PC-9 (cell line): ENCODE measurements at regions of chr5 and their contacts with region 1.

Region 1: GRCh38 chr5:32223946-32224608 is 50.0 kb upstream of the GOLPH3 start:
- DNase-seq: peak; percentile 94 to 96
- H3K4me3 ChIP-seq: no peak overlapping the region
- H3K27ac ChIP-seq: peak overlapping the region; percentile 57
- H3K4me1 ChIP-seq: peaks cover 33% of the 10 kb centered on the region
- H3K27me3 ChIP-seq: no peaks in the 10 kb centered on the region
- CTCF ChIP-seq: no peak

Region 2: DNA sequence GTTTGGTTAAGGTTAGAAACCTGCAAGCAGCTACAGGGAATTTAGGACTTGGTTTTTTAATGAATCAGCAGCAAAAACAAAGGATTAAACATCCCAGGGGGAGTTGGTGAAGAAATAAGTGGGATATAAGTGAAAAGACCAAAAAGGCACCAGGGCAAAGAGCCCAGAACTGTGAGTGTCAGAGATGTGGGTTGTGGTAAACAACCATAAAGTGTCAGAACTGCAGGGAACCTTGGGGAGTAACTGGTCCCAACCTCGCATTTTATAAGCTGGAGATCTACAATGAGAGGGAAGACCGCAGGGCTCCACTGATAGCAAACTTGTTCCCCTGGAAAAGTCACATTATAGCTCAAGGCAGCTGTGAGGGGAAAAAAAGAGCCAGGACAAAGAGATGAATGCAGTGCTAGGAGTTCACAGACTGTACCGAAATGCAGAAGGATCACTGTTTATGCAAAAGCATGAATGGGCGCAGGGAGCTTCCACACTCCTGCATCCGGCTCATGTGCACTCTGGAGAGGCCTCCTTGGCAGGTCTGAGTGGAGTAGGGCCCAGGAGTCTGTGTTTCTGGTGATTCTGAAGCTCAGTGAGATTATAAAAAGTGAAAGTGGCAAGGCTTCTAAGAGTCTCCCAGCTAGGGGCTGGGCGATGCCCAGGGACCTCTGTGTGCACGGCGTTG is 206.2 kb before region 1 on chr5:
- CTCF ChIA-PET with region 1: no interaction called
- POLR2A ChIA-PET with region 1: no interaction called
- intact Hi-C with region 1: no loop called
- DNase-seq: no peak
- H3K4me3 ChIP-seq: no peak overlapping the region
- H3K27ac ChIP-seq: no peak overlapping the region
- H3K4me1 ChIP-seq: no peaks in the 10 kb centered on the region
- H3K27me3 ChIP-seq: peaks cover 91% of the 10 kb centered on the region
- CTCF ChIP-seq: no peak

Region 3: DNA sequence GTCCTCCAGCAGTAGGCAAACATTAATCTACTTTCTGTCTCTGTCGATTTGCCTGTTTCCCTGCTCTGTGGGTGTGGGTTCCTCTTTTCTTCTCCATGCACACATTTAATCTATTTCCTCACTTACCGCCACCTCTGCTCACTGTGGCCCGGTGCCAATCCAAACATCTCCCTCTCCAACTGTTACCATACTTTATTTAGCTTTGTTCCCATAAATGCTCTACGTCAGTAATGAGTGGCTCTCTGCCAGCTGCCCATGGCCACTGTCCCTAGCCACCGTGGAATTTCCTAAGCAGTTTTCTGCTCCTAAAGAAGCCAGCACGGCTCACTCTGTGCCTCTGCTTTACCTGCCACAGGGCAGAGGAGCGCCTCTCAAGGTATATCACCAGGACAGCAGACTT is 30.5 kb before region 1 on chr5:
- CTCF ChIA-PET with region 1: no interaction called
- POLR2A ChIA-PET with region 1: no interaction called
- intact Hi-C with region 1: loop called (anchors 1 kb)
- DNase-seq: peak; percentile 87 to 95
- H3K4me3 ChIP-seq: peak overlapping the region; percentile 1; the same call in 1 of the 2 replicates
- H3K27ac ChIP-seq: no peak overlapping the region
- H3K4me1 ChIP-seq: peaks cover 14% of the 10 kb centered on the region
- H3K27me3 ChIP-seq: no peaks in the 10 kb centered on the region
- CTCF ChIP-seq: no peak

Region 4: DNA sequence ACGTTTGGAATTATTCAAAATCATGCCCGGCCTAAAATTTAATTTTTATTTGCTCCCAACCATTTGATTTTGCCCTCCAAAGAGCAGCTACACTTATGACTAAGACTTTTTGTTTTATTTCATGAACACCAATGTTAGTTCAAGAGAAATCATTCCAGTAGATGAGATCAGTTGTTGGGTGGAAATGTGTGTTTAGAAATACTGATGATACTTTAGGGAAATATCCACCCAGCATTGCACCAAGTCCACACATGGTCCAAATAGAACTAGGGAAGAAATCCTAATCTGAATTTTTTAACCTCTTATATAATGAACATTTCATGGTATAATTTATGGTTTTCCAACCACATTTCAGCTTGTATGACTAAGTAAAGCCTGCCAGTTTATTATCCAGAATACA is 21.7 kb before region 1 on chr5:
- CTCF ChIA-PET with region 1: interaction called, 11 read pairs
- POLR2A ChIA-PET with region 1: no interaction called
- intact Hi-C with region 1: loop called (anchors 1 kb)
- DNase-seq: no peak
- H3K4me3 ChIP-seq: no peak overlapping the region
- H3K27ac ChIP-seq: no peak overlapping the region
- H3K4me1 ChIP-seq: peaks cover 41% of the 10 kb centered on the region
- H3K27me3 ChIP-seq: no peaks in the 10 kb centered on the region
- CTCF ChIP-seq: no peak

Region 5: DNA sequence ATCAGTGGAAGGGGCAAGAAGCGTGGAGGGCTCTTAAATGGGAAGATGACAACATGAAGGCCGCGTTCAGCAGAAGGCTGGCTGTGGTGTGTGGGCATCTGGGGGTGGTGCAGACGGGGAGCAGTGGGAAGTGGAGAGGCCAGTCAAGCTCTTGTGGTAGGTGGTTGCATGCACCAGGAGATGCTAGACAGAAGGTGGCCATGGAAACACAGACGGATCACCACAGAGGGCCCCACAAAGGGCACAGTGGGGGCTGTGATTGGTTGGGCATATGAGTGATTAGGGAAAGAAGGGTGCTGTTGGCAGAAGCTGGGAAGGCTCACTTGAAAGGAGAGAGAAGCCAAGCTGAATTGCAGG is 74.0 kb after region 1 on chr5:
- CTCF ChIA-PET with region 1: no interaction called
- POLR2A ChIA-PET with region 1: interaction called, 11 read pairs
- intact Hi-C with region 1: no loop called
- DNase-seq: peak in 1 of 2 experiments; percentile 26
- H3K4me3 ChIP-seq: no peak overlapping the region
- H3K27ac ChIP-seq: no peak overlapping the region
- H3K4me1 ChIP-seq: no peaks in the 10 kb centered on the region
- H3K27me3 ChIP-seq: no peaks in the 10 kb centered on the region
- CTCF ChIP-seq: no peak